Sigmoid colon (tissue), 7 donors: ENCODE measurements at regions of chr7 and their contacts with region 1.

Region 1: DNA sequence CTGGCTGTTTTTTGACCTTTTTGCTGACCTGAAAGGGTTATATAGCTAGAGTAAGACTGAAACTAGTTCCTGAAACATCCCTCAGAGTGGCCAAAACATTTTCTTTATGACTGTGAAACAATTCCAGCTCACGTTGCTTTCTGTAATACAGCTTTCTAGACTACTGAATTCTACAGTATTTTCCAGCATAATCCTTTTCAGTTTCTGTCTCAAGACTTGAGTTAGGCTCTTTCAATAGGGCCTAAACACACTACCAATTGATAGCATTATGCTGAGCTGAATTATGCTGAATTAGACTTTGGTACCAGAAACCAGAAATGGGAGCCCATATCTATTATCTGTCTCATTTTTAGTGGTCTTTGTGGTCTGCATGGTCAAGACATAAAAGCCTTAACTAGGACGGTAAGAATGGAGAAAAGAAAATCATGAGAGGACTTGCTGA is 72.6 kb downstream of the EPDR1 start:
- DNase-seq: no peak
- H3K4me3 ChIP-seq: no peak overlapping the region
- H3K27ac ChIP-seq: no peak overlapping the region
- H3K4me1 ChIP-seq: no peaks in the 10 kb centered on the region
- H3K27me3 ChIP-seq: no peaks in the 10 kb centered on the region
- CTCF ChIP-seq: no peak
- EP300 ChIP-seq: no peak
- POLR2A ChIP-seq: no peak

Region 2: DNA sequence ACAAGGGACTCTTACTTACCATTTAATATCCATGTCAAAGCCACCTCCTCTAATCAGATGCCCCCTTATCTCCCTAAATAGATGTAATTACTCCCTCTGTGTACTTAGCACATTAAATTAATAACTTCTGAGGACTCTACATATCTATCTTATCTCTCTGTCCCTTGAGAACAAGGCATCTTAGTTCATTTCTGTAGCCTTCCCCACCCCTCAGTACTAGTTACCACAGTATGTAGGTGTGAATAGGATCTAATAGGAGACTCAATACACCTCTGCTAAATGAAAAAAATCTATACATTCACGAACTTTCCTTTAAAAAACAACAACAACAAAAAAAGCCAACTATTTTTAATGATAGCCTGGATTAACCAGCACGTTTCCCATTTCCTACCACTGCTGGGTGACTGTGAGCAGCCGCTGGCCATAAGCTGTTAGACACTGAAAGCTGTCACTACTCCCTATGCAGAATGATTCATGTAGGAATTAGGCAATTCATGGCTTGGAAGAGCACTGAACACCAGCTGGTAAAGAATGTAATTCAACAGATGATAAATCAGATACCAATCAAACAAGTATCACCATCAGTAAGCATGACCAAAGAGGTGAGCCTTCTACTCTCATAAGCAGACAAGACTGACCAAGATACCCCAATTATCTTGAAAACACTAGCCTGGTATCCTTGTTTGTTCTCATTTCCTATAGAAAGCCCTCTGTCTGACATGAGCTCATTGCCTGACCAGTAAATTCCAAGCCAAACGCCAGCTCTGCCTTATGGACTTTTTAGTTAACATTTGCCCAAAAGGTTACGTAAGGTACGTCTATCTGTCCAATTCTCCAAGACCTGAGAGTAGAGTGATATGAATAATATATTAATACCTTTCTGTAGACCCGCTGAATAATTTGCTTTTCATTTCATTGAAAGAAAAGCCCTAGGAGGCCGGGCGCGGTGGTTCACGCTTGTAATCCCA is 672.3 kb before region 1 on chr7:
- intact Hi-C with region 1: no loop called
- DNase-seq: no peak
- H3K4me3 ChIP-seq: no peak overlapping the region
- H3K27ac ChIP-seq: no peak overlapping the region
- H3K4me1 ChIP-seq: peaks cover 0 to 6% (median 2%) of the 10 kb centered on the region in 4 donors
- H3K27me3 ChIP-seq: no peaks in the 10 kb centered on the region
- CTCF ChIP-seq: no peak
- EP300 ChIP-seq: no peak
- POLR2A ChIP-seq: no peak

Region 3: GRCh38 chr7:38016567-38016966 is 23.5 kb after region 1 on chr7:
- intact Hi-C with region 1: loop called (anchors 2 kb)
- DNase-seq: no peak
- H3K4me3 ChIP-seq: no peak overlapping the region
- H3K27ac ChIP-seq: no peak overlapping the region
- H3K4me1 ChIP-seq: no peaks in the 10 kb centered on the region
- H3K27me3 ChIP-seq: no peaks in the 10 kb centered on the region
- CTCF ChIP-seq: no peak
- EP300 ChIP-seq: no peak
- POLR2A ChIP-seq: no peak

Region 4: DNA sequence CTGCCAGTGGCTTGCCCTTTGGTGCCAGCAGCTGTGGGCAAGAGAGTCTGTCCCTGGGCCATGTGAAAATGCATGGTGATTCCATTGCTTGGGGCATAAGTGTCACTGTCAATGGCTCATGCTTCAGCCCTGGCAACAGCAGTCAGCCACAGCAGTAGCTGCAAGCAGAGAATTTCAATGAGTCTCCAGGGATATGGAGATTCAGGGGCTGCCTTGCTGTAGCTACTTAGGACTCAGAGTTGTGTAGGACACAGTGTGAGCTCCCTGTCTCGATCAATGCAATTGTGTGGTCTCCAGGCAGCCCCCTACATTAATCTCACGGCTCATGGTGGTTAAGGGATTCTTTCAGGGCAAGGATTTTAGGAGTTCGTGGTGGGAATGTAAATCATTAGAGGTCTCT is 58.7 kb after region 1 on chr7:
- intact Hi-C with region 1: no loop called
- DNase-seq: no peak
- H3K4me3 ChIP-seq: no peak overlapping the region
- H3K27ac ChIP-seq: no peak overlapping the region
- H3K4me1 ChIP-seq: no peaks in the 10 kb centered on the region
- H3K27me3 ChIP-seq: no peaks in the 10 kb centered on the region
- CTCF ChIP-seq: no peak
- EP300 ChIP-seq: no peak
- POLR2A ChIP-seq: no peak